BJ (cell line): ENCODE measurements at regions of chr3 and their contacts with region 1.

Region 1: DNA sequence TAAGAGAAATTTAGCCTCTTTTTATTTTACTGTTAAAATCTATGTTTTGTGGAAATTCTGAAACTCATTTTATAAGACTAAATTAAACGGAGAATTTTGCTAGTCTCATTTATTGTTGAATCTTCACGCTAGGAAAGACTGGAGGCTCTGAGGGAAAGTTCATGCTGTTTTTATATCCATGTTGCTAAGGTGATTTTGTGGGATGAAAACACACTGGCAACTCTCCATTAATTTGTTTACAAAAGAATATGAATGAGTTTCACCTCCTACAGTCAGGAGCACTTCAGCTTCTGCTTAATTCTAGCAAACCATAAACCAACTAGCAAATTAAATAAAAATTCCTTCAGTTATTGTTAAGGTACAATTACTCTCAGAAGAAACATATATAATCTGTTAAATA is 195.4 kb downstream of the RAP2B start:
- DNase-seq: no peak
- H3K4me3 ChIP-seq: no peak overlapping the region
- H3K27me3 ChIP-seq: no peaks in the 10 kb centered on the region
- CTCF ChIP-seq: no peak

Region 2: GRCh38 chr3:153061938-153062528 is 295.4 kb before region 1 on chr3:
- CTCF ChIA-PET with region 1: no interaction called
- POLR2A ChIA-PET with region 1: interaction called, 17 read pairs
- DNase-seq: no peak
- H3K4me3 ChIP-seq: no peak overlapping the region
- H3K27me3 ChIP-seq: no peaks in the 10 kb centered on the region
- CTCF ChIP-seq: no peak

Region 3: DNA sequence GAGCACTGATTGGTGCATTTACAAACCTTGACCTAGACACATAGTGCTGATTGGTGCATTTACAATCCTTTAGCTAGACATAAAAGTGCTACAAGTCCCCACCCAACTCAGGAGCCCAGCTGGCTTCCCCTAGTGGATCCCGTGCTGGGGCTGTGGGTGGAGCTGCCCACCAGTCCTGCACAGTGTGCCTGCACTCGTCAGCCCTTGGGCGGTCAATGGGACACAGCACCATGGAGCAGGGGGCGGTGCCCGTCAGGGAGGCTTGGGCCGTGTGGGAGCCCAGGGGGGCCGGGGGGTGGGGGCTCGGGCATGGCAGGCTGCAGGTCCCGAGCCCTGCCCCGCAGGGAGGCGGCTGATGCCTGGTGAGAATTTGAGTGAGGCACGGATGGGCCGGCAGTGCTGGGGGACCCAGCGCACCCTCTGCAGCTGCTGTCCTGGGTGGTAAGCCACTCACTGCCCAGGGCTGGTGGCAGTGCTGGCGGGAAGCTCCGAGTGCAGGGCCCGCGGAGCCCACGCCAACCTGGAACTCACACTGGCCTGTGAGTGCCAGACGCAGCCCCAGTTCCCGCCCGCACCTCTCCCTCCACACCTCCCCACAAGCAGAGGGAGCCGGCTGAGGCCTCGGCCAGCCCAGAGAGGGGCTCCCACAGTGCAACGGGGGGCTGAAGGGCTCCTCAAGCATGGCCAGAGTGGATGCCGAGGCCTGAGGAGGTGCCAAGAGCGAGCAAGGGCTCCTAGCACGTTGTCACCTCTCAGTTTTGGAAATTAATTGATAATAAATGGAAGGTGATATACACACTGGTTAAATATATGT is 12.3 kb after region 1 on chr3:
- CTCF ChIA-PET with region 1: interaction called, 3 read pairs
- POLR2A ChIA-PET with region 1: interaction called, 10 read pairs
- DNase-seq: no peak
- H3K4me3 ChIP-seq: no peak overlapping the region
- H3K27me3 ChIP-seq: no peaks in the 10 kb centered on the region
- CTCF ChIP-seq: no peak

Region 4: DNA sequence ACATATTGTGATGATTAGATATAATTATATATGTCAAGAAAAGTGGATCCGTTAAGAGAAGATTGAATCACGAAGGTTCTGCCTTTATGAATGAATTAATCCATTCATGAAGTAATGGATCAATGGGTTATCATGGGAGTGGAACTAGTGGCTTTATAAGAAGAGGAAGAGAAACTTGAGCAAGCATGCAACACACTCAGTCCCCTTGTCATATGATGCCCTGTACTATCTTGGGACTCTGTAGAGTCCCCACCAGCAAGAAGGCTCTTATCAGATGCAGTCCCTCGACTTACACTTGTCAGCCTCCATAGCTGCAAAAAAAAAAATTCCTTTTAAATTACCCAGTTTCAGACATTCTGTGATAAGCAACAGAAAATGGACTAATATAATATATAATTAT is 106.5 kb after region 1 on chr3:
- CTCF ChIA-PET with region 1: no interaction called
- POLR2A ChIA-PET with region 1: no interaction called
- DNase-seq: no peak
- H3K4me3 ChIP-seq: no peak overlapping the region
- H3K27me3 ChIP-seq: no peaks in the 10 kb centered on the region
- CTCF ChIP-seq: no peak